CD8-positive, alpha-beta T cell (primary cell): ENCODE measurements at regions of chr7 and their contacts with region 1.

Region 1: DNA sequence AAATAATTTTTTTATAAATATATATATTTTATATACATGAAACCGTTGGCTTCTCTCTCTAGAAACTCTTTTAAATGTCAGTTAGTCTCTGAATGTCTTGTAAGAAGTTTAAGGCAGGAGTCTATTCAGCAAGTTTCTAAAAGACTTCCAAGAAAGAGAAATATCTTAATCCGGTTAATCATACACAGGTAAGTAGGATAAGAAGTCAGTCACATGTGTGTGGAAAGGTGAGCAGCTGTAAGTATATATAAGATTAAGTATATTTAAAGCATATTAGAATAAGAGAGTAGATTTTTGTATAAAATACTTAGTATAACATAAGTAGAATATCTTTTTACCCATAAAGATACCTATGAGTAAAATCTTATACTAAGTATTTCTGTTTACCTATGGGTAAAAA is 48.9 kb downstream of the AGBL3 start:
- DNase-seq: no peak
- ATAC-seq: no peak
- H3K4me3 ChIP-seq: no peak overlapping the region
- H3K4me3 Mint-ChIP-seq: no peak overlapping the region
- H3K27ac ChIP-seq: no peak overlapping the region
- H3K27ac Mint-ChIP-seq: no peak overlapping the region
- H3K4me1 ChIP-seq: no peaks in the 10 kb centered on the region
- H3K4me1 Mint-ChIP-seq: no peaks in the 10 kb centered on the region
- H3K27me3 ChIP-seq: no peaks in the 10 kb centered on the region
- H3K27me3 Mint-ChIP-seq: peaks cover 3% of the 10 kb centered on the region
- CTCF ChIP-seq: no peak

Region 2: DNA sequence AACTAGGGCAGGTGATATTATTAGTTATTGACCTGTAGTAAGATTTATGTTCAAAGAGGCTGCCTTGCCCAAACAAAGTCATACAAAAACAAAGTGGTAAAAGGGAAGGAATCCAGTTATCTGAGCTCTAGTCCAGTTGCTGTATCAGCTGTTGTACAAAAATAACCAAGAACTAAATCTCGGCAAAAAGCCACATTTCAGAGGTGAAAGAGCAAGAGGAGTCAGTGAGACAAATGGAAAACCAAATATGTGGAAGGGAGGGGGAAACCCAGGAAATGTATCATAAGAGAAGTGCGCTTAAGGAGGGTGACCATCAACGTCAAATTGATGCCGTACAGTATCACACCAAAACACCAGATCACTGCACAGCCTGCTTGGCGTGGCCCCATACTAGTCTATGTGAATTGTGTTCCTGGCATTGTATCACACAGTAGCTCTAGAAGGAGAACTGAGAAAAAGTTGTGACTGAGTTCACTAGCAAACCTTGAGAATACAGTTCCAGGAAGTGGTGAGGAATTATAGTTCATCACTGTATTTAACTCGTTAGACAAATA is 42.5 kb before region 1 on chr7:
- CTCF ChIA-PET with region 1: no interaction called
- POLR2A ChIA-PET with region 1: no interaction called
- intact Hi-C with region 1: loop called in 1 of 2 experiments (anchors 5 kb)
- DNase-seq: peak in 5 of 9 experiments; percentile 13 to 66 (median 41)
- ATAC-seq: peak; percentile 58
- H3K4me3 ChIP-seq: peak overlapping the region in 1 of 2 experiments; percentile 11
- H3K4me3 Mint-ChIP-seq: peak overlapping the region; percentile 59
- H3K27ac ChIP-seq: peak overlapping the region; percentile 49 to 58
- H3K27ac Mint-ChIP-seq: peak overlapping the region; percentile 91
- H3K4me1 ChIP-seq: peaks cover 83% of the 10 kb centered on the region
- H3K4me1 Mint-ChIP-seq: peaks cover 81% of the 10 kb centered on the region
- H3K27me3 ChIP-seq: no peaks in the 10 kb centered on the region
- H3K27me3 Mint-ChIP-seq: no peaks in the 10 kb centered on the region
- CTCF ChIP-seq: no peak